WTC11 (cell line): ENCODE measurements at regions of chr14 and their contacts with region 1.

Region 1: GRCh38 chr14:72516936-72517700 is 376.8 kb downstream of the DPF3 start:
- DNase-seq: peak; percentile 75
- ATAC-seq: peak; percentile 74
- H3K4me3 Mint-ChIP-seq: no peak overlapping the region
- H3K27ac Mint-ChIP-seq: no peak overlapping the region
- H3K4me1 Mint-ChIP-seq: peaks cover 3% of the 10 kb centered on the region; the same call in 1 of the 2 replicates
- H3K27me3 Mint-ChIP-seq: no peaks in the 10 kb centered on the region
- CTCF ChIP-seq: peak; percentile 60; the same call in 1 of the 2 replicates

Region 2: GRCh38 chr14:72503696-72504368 is 13.3 kb before region 1 on chr14:
- CTCF ChIA-PET with region 1: interaction called, 11 read pairs
- POLR2A ChIA-PET with region 1: no interaction called
- DNase-seq: no peak
- ATAC-seq: no peak
- H3K4me3 Mint-ChIP-seq: no peak overlapping the region
- H3K27ac Mint-ChIP-seq: no peak overlapping the region
- H3K4me1 Mint-ChIP-seq: no peaks in the 10 kb centered on the region
- H3K27me3 Mint-ChIP-seq: no peaks in the 10 kb centered on the region; the same call in 1 of the 2 replicates
- CTCF ChIP-seq: no peak

Region 3: GRCh38 chr14:72544619-72545387 is 27.7 kb after region 1 on chr14:
- CTCF ChIA-PET with region 1: interaction called, 24 read pairs
- POLR2A ChIA-PET with region 1: interaction called, 3 read pairs
- DNase-seq: peak; percentile 67
- ATAC-seq: peak; percentile 92
- H3K4me3 Mint-ChIP-seq: no peak overlapping the region
- H3K27ac Mint-ChIP-seq: peak overlapping the region; percentile 74; the same call in 1 of the 2 replicates
- H3K4me1 Mint-ChIP-seq: peaks cover 23% of the 10 kb centered on the region
- H3K27me3 Mint-ChIP-seq: no peaks in the 10 kb centered on the region; the same call in 1 of the 2 replicates
- CTCF ChIP-seq: no peak

Region 4: GRCh38 chr14:72717220-72717619 is 200.1 kb after region 1 on chr14:
- CTCF ChIA-PET with region 1: no interaction called
- POLR2A ChIA-PET with region 1: no interaction called
- DNase-seq: no peak
- ATAC-seq: no peak
- H3K4me3 Mint-ChIP-seq: no peak overlapping the region
- H3K27ac Mint-ChIP-seq: no peak overlapping the region
- H3K4me1 Mint-ChIP-seq: no peaks in the 10 kb centered on the region
- H3K27me3 Mint-ChIP-seq: no peaks in the 10 kb centered on the region
- CTCF ChIP-seq: no peak

Region 5: DNA sequence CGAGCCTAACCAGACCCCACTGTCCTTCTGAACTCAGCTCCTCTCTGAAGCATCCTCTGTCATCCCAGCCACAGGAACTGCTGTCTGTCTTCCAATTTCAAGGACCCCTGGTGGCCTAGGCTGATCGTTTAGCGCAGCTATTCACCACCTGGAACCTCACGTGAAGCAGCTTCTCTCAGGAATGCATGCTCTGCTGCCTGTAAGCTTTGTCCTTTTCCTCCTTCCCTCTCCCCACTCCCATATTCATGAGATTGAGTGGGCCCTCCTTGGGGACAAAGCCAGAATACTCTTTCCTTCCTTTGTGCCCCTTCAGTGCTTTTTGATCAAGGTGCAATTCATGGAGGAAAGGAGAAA is 359.6 kb after region 1 on chr14:
- CTCF ChIA-PET with region 1: interaction called, 11 read pairs
- POLR2A ChIA-PET with region 1: no interaction called
- DNase-seq: peak; percentile 45
- ATAC-seq: peak; percentile 94
- H3K4me3 Mint-ChIP-seq: no peak overlapping the region
- H3K27ac Mint-ChIP-seq: 0 out of 2 replicates have a peak overlapping the region, but pooled peaks have one; percentile 8
- H3K4me1 Mint-ChIP-seq: peaks cover 23% of the 10 kb centered on the region
- H3K27me3 Mint-ChIP-seq: peaks cover 10% of the 10 kb centered on the region
- CTCF ChIP-seq: no peak

Region 6: GRCh38 chr14:72904840-72905561 is 387.9 kb after region 1 on chr14:
- CTCF ChIA-PET with region 1: interaction called, 47 read pairs
- POLR2A ChIA-PET with region 1: no interaction called
- DNase-seq: peak; percentile 55
- ATAC-seq: peak; percentile 57
- H3K4me3 Mint-ChIP-seq: no peak overlapping the region
- H3K27ac Mint-ChIP-seq: no peak overlapping the region
- H3K4me1 Mint-ChIP-seq: peaks cover 25% of the 10 kb centered on the region
- H3K27me3 Mint-ChIP-seq: no peaks in the 10 kb centered on the region; the same call in 1 of the 2 replicates
- CTCF ChIP-seq: peak; percentile 96

Region 7: DNA sequence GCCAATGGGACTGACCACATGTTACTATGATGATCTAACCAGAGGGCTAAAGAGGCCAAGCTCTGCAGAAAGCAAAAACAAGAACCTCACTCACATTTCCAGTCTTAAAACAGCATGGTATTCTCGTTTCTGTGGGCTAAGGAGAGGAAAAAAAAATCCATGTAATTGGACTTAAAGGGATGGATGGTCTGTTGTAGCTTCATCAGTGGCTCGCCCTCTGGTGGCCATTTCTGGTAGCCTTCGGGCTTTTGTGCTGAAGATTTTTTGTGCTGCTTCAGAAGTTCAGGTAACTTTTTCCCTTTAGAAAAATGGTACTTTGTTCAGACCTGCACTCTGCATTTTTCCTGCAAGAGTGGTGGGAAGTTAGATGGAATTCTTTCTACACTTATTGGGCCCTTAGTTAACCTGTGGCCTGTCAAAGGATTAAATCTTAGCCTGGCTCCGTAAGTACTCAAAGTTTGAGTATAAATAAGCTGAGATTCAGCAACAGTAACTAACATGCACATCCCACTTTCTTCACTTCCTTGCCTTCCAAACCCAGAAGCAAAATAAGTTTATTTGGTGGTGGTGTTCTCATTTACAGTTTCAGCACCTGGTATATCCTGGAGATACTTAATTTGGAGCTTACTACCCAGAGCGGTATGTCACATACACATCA is 431.5 kb after region 1 on chr14:
- CTCF ChIA-PET with region 1: interaction called, 59 read pairs
- POLR2A ChIA-PET with region 1: no interaction called
- DNase-seq: peak; percentile 82
- ATAC-seq: peak; percentile 51
- H3K4me3 Mint-ChIP-seq: no peak overlapping the region
- H3K27ac Mint-ChIP-seq: no peak overlapping the region
- H3K4me1 Mint-ChIP-seq: no peaks in the 10 kb centered on the region
- H3K27me3 Mint-ChIP-seq: no peaks in the 10 kb centered on the region
- CTCF ChIP-seq: peak; percentile 79